IMR-90 (cell line): ENCODE measurements at regions of chr10 and their contacts with region 1.

Region 1: GRCh38 chr10:22573820-22574569 is 140.4 kb downstream of the PIP4K2A start:
- DNase-seq: peak; percentile 41
- ATAC-seq: peak; percentile 42; the same call in 1 of the 2 replicates
- H3K4me3 ChIP-seq: no peak overlapping the region
- H3K27ac ChIP-seq: no peak overlapping the region
- H3K4me1 ChIP-seq: no peaks in the 10 kb centered on the region
- H3K27me3 ChIP-seq: no peaks in the 10 kb centered on the region
- CTCF ChIP-seq: peak; percentile 53
- POLR2A ChIP-seq: no peak
- RAD21 ChIP-seq: peak; percentile 65

Region 2: GRCh38 chr10:22537810-22538209 is 36.2 kb before region 1 on chr10:
- CTCF ChIA-PET with region 1: no interaction called
- POLR2A ChIA-PET with region 1: no interaction called
- dilution Hi-C with region 1: no loop called
- in situ Hi-C with region 1: no loop called
- intact Hi-C with region 1: no loop called
- DNase-seq: no peak
- ATAC-seq: no peak
- H3K4me3 ChIP-seq: no peak overlapping the region
- H3K27ac ChIP-seq: no peak overlapping the region
- H3K4me1 ChIP-seq: no peaks in the 10 kb centered on the region
- H3K27me3 ChIP-seq: no peaks in the 10 kb centered on the region
- CTCF ChIP-seq: no peak
- POLR2A ChIP-seq: no peak
- RAD21 ChIP-seq: no peak

Region 3: DNA sequence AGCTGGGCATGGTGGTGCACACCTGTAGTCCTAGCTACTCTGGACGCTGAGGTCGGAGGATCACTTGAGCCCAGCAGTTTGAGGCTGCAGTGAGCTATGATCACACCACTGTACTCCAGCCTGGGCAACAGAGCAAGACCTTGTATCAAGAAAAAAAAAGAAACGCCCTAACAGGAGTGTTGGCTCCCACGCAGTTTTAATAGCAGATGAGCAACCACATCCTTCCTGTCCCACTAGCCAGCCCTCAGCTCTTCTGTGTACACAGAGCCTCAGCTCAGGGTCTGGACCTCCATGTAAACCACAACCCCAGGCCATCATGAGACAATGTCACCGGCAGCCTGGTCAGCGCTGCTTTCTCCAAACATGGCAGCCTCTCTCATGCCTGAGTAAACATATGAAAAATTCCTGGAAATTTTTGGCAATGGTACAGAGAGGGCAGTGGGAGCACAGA is 32.2 kb after region 1 on chr10:
- CTCF ChIA-PET with region 1: no interaction called
- POLR2A ChIA-PET with region 1: no interaction called
- dilution Hi-C with region 1: no loop called
- in situ Hi-C with region 1: no loop called
- intact Hi-C with region 1: no loop called
- DNase-seq: peak; percentile 59
- ATAC-seq: peak; percentile 70
- H3K4me3 ChIP-seq: no peak overlapping the region
- H3K27ac ChIP-seq: no peak overlapping the region
- H3K4me1 ChIP-seq: peaks cover 8% of the 10 kb centered on the region
- H3K27me3 ChIP-seq: no peaks in the 10 kb centered on the region
- CTCF ChIP-seq: no peak
- POLR2A ChIP-seq: no peak
- RAD21 ChIP-seq: no peak

Region 4: DNA sequence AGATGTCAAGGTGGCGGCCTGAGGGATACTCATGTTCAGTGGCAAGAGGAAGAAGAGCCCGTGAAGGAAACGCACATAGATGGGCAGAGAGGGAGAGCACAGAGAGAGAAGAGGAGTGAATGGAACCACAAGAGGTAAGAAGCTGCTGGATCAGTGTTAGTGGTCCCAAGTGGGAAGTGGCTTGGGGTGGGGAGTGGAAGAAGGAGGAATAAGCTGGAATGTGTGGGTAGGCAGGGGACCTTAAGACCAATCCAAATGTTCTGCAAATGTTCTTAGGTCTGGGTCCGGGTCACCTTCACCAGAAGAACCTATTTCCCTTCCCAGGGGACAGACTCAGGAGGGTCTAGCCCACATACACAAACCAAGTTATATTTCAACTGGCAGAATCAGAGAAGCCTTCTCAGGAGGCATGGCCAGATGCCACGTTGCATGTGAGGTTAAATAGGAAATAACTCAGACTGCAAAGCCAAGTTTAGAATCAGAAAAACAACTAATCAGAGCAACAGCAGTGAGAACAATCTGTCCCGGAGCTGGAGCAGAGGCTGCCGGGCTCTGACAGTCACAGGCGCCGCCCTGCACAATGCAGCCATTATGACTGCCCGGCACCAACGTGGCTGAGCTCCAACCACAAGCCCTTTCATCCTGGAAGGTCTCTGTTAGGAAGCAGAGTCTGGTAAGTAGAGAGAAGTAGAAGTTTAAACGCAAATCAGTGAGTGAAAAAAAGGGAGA is 275.2 kb after region 1 on chr10:
- CTCF ChIA-PET with region 1: no interaction called
- POLR2A ChIA-PET with region 1: no interaction called
- dilution Hi-C with region 1: no loop called
- in situ Hi-C with region 1: no loop called
- intact Hi-C with region 1: loop called (anchors 10 kb)
- DNase-seq: no peak
- ATAC-seq: peak; percentile 75
- H3K4me3 ChIP-seq: 0 out of 2 replicates have a peak overlapping the region, but pooled peaks have one; percentile 9
- H3K27ac ChIP-seq: no peak overlapping the region
- H3K4me1 ChIP-seq: no peaks in the 10 kb centered on the region
- H3K27me3 ChIP-seq: no peaks in the 10 kb centered on the region; the same call in 1 of the 2 replicates
- CTCF ChIP-seq: no peak
- POLR2A ChIP-seq: no peak
- RAD21 ChIP-seq: no peak

Region 5: DNA sequence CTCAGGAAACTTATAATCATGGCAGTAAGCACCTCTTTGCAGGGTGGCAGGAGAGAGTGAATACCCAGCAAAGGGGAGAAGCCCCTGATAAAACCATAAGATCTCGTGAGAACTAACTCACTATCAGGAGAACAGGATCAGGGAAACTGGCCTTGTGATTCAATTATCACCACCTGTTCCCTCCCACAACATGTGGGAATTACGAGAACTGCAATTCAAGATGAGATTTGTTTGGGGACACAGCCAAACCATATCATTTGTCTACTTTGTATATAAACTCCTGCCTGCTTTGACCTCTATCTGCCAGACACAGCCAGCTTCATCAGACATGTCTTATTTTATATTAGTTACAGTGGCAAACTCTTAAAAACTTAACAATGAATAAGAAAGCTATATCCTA is 404.3 kb after region 1 on chr10:
- CTCF ChIA-PET with region 1: no interaction called
- POLR2A ChIA-PET with region 1: no interaction called
- dilution Hi-C with region 1: no loop called
- in situ Hi-C with region 1: loop called (anchors 10 kb)
- intact Hi-C with region 1: loop called (anchors 2 kb)
- DNase-seq: no peak
- ATAC-seq: no peak
- H3K4me3 ChIP-seq: no peak overlapping the region
- H3K27ac ChIP-seq: no peak overlapping the region
- H3K4me1 ChIP-seq: no peaks in the 10 kb centered on the region
- H3K27me3 ChIP-seq: peaks cover 6% of the 10 kb centered on the region; the same call in 1 of the 2 replicates
- CTCF ChIP-seq: no peak
- POLR2A ChIP-seq: no peak
- RAD21 ChIP-seq: no peak

Region 6: GRCh38 chr10:23067939-23068775 is 494.2 kb after region 1 on chr10:
- CTCF ChIA-PET with region 1: no interaction called
- POLR2A ChIA-PET with region 1: no interaction called
- dilution Hi-C with region 1: no loop called
- in situ Hi-C with region 1: no loop called
- intact Hi-C with region 1: no loop called
- DNase-seq: peak; percentile 63
- ATAC-seq: peak; percentile 84
- H3K4me3 ChIP-seq: no peak overlapping the region
- H3K27ac ChIP-seq: no peak overlapping the region
- H3K4me1 ChIP-seq: no peaks in the 10 kb centered on the region
- H3K27me3 ChIP-seq: peaks cover 6% of the 10 kb centered on the region
- CTCF ChIP-seq: peak; percentile 72
- POLR2A ChIP-seq: no peak
- RAD21 ChIP-seq: peak; percentile 67